ENCODE measurements at regions of chr11 and their contacts with region 1.

Region 1: DNA sequence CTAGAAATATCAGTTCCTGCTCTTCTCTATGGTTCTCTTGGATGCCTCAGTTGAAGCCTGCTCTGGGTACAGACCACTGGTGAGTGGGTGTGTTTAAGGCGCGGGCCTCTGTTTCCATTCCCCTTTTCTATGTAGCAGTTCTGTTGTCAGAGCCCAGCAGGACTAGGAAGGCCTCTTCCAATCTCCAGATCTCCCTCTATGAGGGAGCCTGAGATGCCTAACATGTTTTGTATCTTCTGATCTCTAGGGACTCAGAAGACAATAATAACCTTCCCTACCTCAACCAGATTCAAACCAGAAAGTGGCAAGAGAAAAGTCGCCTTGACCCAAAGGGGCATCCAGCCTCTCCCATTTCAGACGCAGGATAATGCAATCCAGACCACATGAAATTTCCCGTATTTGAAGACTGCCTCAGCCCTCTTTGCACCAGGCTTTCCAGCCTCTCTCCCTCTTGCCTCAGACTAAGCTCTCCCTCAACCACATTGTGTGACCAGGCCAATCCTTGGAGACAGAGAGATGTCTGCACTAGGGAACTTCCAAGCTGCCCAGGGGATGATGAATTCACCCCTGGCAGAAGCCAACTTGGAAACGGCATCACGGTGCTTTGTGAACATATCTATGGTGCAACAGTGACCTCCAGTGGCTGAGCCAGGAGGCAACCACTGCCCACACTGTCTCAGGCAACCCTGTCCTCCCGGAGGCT is 150.1 kb upstream of the UBASH3B start:
- DNase-seq: peak; percentile 88 to 90
- ATAC-seq: peak; percentile 95
- H3K4me3 ChIP-seq: no peak overlapping the region
- H3K27ac ChIP-seq: no peak overlapping the region
- H3K4me1 ChIP-seq: no peaks in the 10 kb centered on the region
- H3K27me3 ChIP-seq: no peaks in the 10 kb centered on the region

Region 2: GRCh38 chr11:121591405-121592033 is 913.9 kb before region 1 on chr11:
- intact Hi-C with region 1: loop called in 1 of 2 experiments (anchors 5 kb)
- DNase-seq: peak in 1 of 2 donors; percentile 60
- ATAC-seq: peak; percentile 85
- H3K4me3 ChIP-seq: no peak overlapping the region
- H3K27ac ChIP-seq: no peak overlapping the region
- H3K4me1 ChIP-seq: no peaks in the 10 kb centered on the region
- H3K27me3 ChIP-seq: no peaks in the 10 kb centered on the region

Region 3: GRCh38 chr11:122020902-122021301 is 484.6 kb before region 1 on chr11:
- intact Hi-C with region 1: loop called (anchors 5 kb)
- DNase-seq: no peak
- ATAC-seq: no peak
- H3K4me3 ChIP-seq: no peak overlapping the region
- H3K27ac ChIP-seq: no peak overlapping the region
- H3K4me1 ChIP-seq: no peaks in the 10 kb centered on the region
- H3K27me3 ChIP-seq: no peaks in the 10 kb centered on the region

Region 4: GRCh38 chr11:122209619-122210366 is 295.7 kb before region 1 on chr11:
- intact Hi-C with region 1: loop called in 1 of 2 experiments (anchors 2 kb)
- DNase-seq: peak in 1 of 2 donors; percentile 78
- ATAC-seq: peak; percentile 74
- H3K4me3 ChIP-seq: no peak overlapping the region
- H3K27ac ChIP-seq: peak overlapping the region; percentile 63 to 94
- H3K4me1 ChIP-seq: peaks cover 8 to 12% of the 10 kb centered on the region in 2 donors
- H3K27me3 ChIP-seq: no peaks in the 10 kb centered on the region

Region 5: GRCh38 chr11:122293296-122294023 is 212.0 kb before region 1 on chr11:
- intact Hi-C with region 1: loop called in 1 of 2 experiments (anchors 5 kb)
- DNase-seq: no peak
- ATAC-seq: no peak
- H3K4me3 ChIP-seq: no peak overlapping the region
- H3K27ac ChIP-seq: peak overlapping the region in 1 of 2 donors; percentile 35
- H3K4me1 ChIP-seq: peaks cover 0 to 3% of the 10 kb centered on the region in 2 donors
- H3K27me3 ChIP-seq: no peaks in the 10 kb centered on the region

Region 6: DNA sequence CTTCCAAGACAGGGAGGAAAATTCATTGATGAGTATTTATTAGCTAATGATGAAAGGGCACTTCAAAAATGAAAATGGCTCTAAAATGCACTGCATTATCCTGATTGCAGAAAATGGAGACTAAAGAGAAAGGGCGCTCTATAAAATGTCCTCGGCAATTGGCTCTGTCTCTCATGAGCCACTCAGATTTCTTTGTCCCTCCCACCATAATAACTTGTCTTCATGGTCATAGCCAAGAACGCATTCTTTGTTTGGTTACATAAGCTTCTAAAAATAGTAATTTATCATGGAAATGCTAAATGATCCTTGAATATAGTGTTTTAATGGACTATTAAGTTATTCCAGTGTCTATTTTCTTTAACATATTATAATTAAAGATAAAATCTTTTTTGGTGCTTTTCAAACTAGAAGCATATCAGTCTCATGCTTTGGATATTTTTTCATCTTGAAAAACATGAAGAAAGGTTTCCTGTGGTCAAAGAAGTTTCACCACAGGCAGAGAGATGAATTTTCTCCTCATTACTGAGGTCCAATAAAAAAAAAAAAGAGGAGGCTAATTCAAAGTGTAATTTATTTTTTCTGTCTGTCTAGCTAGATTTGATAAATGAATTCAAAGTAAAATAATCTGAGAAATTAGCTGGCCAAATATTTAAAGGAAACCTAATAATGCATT is 151.3 kb before region 1 on chr11:
- intact Hi-C with region 1: no loop called
- DNase-seq: no peak
- ATAC-seq: peak; percentile 88
- H3K4me3 ChIP-seq: peak overlapping the region in 1 of 2 donors; percentile 58
- H3K27ac ChIP-seq: peak overlapping the region in 1 of 2 donors; percentile 57
- H3K4me1 ChIP-seq: peaks cover 0 to 8% of the 10 kb centered on the region in 2 donors
- H3K27me3 ChIP-seq: no peaks in the 10 kb centered on the region

Region 7: DNA sequence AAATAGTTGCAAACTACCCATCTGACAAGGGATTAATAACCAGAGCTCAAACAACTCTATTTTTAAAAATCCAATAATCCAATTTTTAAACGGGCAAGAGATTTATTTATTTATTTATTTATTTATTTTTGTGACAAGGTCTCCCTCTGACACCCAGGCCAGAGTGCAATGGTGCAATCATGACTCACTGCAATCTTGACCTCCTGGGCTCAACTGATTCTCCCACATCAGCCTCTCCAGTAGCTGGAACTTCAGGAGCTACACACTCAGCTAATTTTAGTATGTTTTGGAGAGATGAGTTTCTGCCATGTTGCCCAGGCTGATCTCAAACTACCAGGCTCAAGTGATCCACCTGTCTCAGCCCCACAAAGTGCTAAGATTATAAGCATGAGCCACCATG is 122.3 kb before region 1 on chr11:
- intact Hi-C with region 1: no loop called
- DNase-seq: no peak
- ATAC-seq: no peak
- H3K4me3 ChIP-seq: no peak overlapping the region
- H3K27ac ChIP-seq: no peak overlapping the region
- H3K4me1 ChIP-seq: no peaks in the 10 kb centered on the region
- H3K27me3 ChIP-seq: no peaks in the 10 kb centered on the region